HCT116 (cell line): ENCODE measurements at regions of chr6 and their contacts with region 1.

Region 1: GRCh38 chr6:57316581-57317059 is 810 bp upstream of the PRIM2 start:
- DNase-seq: peak; percentile 91
- ATAC-seq: peak; percentile 78
- H3K4me3 ChIP-seq: peak overlapping the region; percentile 89 to 96
- H3K27ac ChIP-seq: peak overlapping the region; percentile 61
- H3K4me1 ChIP-seq: peaks cover 4 to 35% of the 10 kb centered on the region in 2 experiments
- H3K27me3 ChIP-seq: no peaks in the 10 kb centered on the region
- CTCF ChIP-seq: peak; percentile 68 to 84 (median 83)
- POLR2A ChIP-seq: peak; percentile 52
- RAD21 ChIP-seq: peak; percentile 98

Region 2: DNA sequence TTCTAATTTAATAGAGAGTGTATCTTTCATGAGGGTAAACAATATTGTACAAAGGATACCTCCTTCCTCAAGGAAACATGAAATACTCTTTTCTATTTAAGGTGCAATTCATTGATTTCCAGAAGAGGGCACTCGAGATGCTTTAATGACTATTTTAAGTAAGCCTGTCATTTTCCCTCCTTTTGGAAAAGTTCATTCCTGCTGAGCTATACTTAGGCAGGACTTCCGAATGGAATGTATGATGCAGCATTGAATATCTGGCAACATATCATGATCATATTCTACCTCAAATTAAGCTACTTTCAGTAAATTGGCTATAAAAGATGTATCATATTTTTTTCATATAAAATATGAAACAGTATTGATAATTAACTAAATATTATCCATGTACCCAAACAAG is 679.0 kb before region 1 on chr6:
- CTCF ChIA-PET with region 1: no interaction called
- POLR2A ChIA-PET with region 1: no interaction called
- RAD21 ChIA-PET with region 1: no interaction called
- intact Hi-C with region 1: loop called (anchors 5 kb)
- DNase-seq: peak; percentile 49
- ATAC-seq: peak; percentile 70
- H3K4me3 ChIP-seq: no peak overlapping the region
- H3K27ac ChIP-seq: no peak overlapping the region; the same call in 1 of the 2 replicates
- H3K4me1 ChIP-seq: peaks cover 4% of the 10 kb centered on the region in 2 experiments
- H3K27me3 ChIP-seq: no peaks in the 10 kb centered on the region
- CTCF ChIP-seq: peak; percentile 28 to 69 (median 60); a peak in 4 of 6 replicates
- POLR2A ChIP-seq: no peak
- RAD21 ChIP-seq: peak; percentile 80

Region 3: DNA sequence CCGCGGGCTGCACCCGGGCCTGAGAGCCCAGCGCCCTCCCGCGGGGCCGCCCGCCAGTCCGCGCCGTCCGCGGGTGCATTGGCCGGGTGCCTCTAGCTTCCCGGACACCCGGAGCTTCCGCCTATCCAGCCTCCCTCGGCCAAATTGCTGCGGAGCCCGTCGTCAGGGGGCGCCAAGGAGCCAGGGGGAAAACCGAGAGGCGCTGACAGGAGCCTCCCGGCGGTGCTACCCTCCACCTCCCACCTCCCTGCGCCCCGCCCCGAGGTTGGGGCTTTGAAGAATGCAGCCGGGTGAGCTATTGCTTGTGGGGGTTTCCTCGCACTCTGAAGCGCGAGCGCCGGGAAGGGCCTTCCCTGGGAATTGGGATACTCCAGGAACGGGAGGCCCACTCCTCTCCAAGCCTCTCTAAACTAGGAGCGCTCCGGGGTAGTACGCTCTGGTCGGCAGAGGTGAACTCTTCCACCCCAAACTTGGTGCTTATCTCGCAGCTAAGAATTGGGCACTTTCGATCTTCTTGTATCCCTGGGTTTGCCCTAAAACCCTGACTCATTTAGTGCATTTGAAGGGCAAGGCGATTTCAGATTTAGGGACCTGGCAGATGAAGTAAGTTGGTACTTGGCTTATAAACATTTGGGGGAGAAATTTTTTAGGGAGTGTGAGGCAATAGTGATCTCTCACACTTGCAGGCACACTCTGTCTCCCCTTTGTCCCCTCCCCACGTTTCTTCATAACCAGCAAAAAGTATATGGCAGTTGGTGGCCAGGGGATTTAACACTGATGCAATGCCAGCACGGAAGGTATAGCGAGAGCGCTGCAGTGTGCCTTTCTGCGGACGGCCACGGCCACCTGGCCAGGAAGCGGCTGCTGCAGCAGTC is 361.2 kb before region 1 on chr6:
- CTCF ChIA-PET with region 1: interaction called, 11 read pairs
- POLR2A ChIA-PET with region 1: no interaction called
- RAD21 ChIA-PET with region 1: no interaction called
- intact Hi-C with region 1: loop called (anchors 1 kb)
- DNase-seq: peak; percentile 87
- ATAC-seq: peak; percentile 83
- H3K4me3 ChIP-seq: peak overlapping the region; percentile 88 to 92
- H3K27ac ChIP-seq: peak overlapping the region; percentile 99
- H3K4me1 ChIP-seq: peaks cover 15 to 58% of the 10 kb centered on the region in 2 experiments
- H3K27me3 ChIP-seq: no peaks in the 10 kb centered on the region
- CTCF ChIP-seq: peak; percentile 81 to 90 (median 86)
- POLR2A ChIP-seq: no peak
- RAD21 ChIP-seq: peak; percentile 76

Region 4: GRCh38 chr6:57158658-57159057 is 158.0 kb before region 1 on chr6:
- CTCF ChIA-PET with region 1: no interaction called
- POLR2A ChIA-PET with region 1: no interaction called
- RAD21 ChIA-PET with region 1: no interaction called
- intact Hi-C with region 1: no loop called
- DNase-seq: no peak
- ATAC-seq: no peak
- H3K4me3 ChIP-seq: no peak overlapping the region
- H3K27ac ChIP-seq: no peak overlapping the region
- H3K4me1 ChIP-seq: no peaks in the 10 kb centered on the region
- H3K27me3 ChIP-seq: no peaks in the 10 kb centered on the region
- CTCF ChIP-seq: no peak
- POLR2A ChIP-seq: no peak
- RAD21 ChIP-seq: no peak

Region 5: DNA sequence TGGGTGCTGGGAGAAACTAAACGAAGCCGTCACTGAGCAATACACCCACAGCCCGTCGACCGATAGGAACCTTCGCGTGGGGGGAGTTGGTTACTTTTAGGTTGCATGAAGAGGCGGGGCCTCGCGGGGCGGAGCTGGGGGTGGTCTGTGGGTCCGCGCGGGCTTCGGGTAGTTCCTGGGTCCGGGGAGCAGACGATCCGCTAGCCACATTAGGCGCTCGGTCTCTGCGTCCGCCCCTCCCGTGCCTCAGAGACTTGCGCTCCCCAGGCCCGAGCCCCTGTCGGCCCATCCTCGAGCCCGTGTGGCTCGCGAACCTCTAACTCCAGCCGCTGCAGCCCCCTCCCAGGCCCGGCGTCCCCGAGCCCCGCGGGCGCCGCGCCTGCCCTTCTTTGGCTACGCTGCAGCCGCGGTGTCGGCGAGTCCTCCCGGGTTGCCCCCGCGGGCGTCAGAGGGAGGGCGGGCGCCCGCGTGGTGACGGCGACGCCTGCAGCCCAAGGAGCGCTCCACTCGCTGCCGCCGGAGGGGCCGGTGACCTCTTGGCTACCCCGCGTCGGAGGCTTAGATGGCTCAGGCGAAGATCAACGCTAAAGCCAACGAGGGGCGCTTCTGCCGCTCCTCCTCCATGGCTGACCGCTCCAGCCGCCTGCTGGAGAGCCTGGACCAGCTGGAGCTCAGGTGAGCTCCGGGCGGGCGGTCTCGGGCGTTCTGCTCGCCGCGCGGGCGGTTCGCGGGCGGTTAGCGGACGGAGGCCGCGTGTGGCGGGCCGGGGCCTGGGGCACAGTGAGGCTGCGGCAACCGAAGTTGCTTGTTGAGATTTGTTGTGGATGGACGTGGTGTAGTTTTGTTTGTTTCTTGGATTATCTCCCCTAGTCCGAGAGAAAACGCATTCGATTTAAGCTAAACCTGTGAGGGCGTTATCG is 144.2 kb before region 1 on chr6 and contains the start of gene BAG2:
- CTCF ChIA-PET with region 1: no interaction called
- POLR2A ChIA-PET with region 1: no interaction called
- RAD21 ChIA-PET with region 1: no interaction called
- intact Hi-C with region 1: loop called (anchors 1 kb)
- DNase-seq: peak; percentile 74
- ATAC-seq: peak; percentile 90
- H3K4me3 ChIP-seq: peak within 1 kb of the TSS; percentile 78 to 85
- H3K27ac ChIP-seq: peak within 1 kb of the TSS; percentile 90
- H3K4me1 ChIP-seq: peaks cover 6 to 20% of the 10 kb centered on the region in 2 experiments
- H3K27me3 ChIP-seq: no peaks in the 10 kb centered on the region
- CTCF ChIP-seq: no peak
- POLR2A ChIP-seq: peak; percentile 96
- RAD21 ChIP-seq: peak; percentile 9; the same call in 1 of the 2 replicates
- total RNA-seq, gene BAG2: 13.5 TPM

Region 6: DNA sequence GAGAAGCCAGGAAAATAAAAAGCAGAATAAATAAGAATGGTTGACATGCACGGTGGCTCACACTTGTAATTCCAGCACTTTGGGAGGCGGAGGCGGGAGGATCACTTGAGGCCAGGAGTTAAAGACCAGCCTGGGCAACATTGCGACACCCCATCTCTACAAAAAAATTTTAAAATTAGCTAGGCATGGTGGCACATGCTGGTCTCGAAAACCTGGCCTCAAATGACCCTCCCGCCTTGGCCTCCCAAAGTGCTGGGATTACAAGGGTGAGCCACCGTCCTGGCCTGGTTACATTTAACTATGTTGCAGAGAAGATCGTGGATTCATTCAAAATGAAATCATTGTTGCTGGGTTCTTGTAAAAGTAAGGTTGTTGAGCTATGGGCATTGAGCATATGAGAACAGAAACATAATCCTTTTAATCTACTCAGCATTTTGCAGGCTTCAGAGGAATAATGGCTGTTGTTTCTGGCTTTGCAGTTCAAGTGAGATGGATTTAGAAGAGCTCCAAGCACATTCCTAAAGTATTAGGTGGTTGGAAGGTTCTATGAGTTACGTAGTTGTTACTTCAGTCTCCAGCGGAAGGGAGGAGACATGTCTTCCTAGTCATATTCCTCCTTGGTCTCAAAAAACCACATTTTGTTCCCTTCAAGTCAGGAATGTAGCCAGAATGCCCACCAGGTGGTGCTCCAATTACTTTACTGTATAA is 48.9 kb before region 1 on chr6:
- CTCF ChIA-PET with region 1: interaction called, 4 read pairs
- POLR2A ChIA-PET with region 1: no interaction called
- RAD21 ChIA-PET with region 1: no interaction called
- intact Hi-C with region 1: loop called (anchors 1 kb)
- DNase-seq: peak; percentile 68
- ATAC-seq: peak; percentile 86
- H3K4me3 ChIP-seq: no peak overlapping the region
- H3K27ac ChIP-seq: no peak overlapping the region
- H3K4me1 ChIP-seq: peaks cover 0 to 7% of the 10 kb centered on the region in 2 experiments; a peak in 1 of 4 replicates
- H3K27me3 ChIP-seq: no peaks in the 10 kb centered on the region
- CTCF ChIP-seq: peak; percentile 44 to 73 (median 57); a peak in 4 of 6 replicates
- POLR2A ChIP-seq: no peak
- RAD21 ChIP-seq: peak; percentile 69